Activated CD4-positive, alpha-beta T cell treated with anti-CD3 and anti-CD28 coated beads, Interleukin-2, amount 10 ng/mL, durations not matched to agents 24 days and 14 days (primary cell): ENCODE measurements at regions of chr16 and their contacts with region 1.

Region 1: GRCh38 chr16:75622761-75623605 is at the start of gene ADAT1:
- DNase-seq: peak; percentile 99
- H3K4me3 Mint-ChIP-seq: peak within 1 kb of the TSS; percentile 97
- H3K27ac Mint-ChIP-seq: peak within 1 kb of the TSS; percentile 97
- H3K4me1 Mint-ChIP-seq: peaks cover 31% of the 10 kb centered on the region
- H3K27me3 Mint-ChIP-seq: no peaks in the 10 kb centered on the region
- total RNA-seq, gene ADAT1: 58.6 and 64.4 TPM in 2 replicates

Region 2: GRCh38 chr16:74296432-74297144 is 1326.4 kb before region 1 on chr16 and contains the start of gene PSMD7:
- intact Hi-C with region 1: loop called (anchors 5 kb)
- DNase-seq: peak; percentile 97
- H3K4me3 Mint-ChIP-seq: peak within 1 kb of the TSS; percentile 89
- H3K27ac Mint-ChIP-seq: peak within 1 kb of the TSS; percentile 89
- H3K4me1 Mint-ChIP-seq: peaks cover 18% of the 10 kb centered on the region
- H3K27me3 Mint-ChIP-seq: no peaks in the 10 kb centered on the region
- total RNA-seq, gene PSMD7: 174 and 178 TPM in 2 replicates

Region 3: GRCh38 chr16:74984535-74985296 is 638.3 kb before region 1 on chr16 and contains the start of gene WDR59:
- intact Hi-C with region 1: loop called (anchors 10 kb)
- DNase-seq: peak; percentile 100
- H3K4me3 Mint-ChIP-seq: peak within 1 kb of the TSS; percentile 94
- H3K27ac Mint-ChIP-seq: peak within 1 kb of the TSS; percentile 95
- H3K4me1 Mint-ChIP-seq: peaks cover 16% of the 10 kb centered on the region
- H3K27me3 Mint-ChIP-seq: no peaks in the 10 kb centered on the region
- total RNA-seq, gene WDR59: 80.6 and 91.5 TPM in 2 replicates

Region 4: DNA sequence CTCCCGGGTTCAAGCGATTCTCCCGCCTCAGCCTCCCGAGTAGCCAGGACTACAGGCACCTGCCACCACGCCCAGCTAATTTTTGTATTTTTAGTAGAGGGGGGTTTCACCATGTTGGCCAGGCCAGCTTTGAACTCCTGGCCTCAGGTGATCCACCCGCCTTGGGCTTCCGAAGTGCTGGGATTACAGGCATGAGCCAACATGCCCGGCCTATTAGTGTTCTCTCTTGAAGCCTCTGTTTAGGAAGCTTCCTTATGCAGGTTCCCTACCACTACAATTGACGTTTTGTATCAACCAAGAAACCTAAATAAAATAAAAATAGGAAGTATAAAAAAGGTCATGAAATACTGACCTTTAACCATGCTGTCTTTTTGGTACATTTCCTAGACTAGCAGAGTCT is 103.1 kb before region 1 on chr16:
- intact Hi-C with region 1: loop called (anchors 1 kb)
- DNase-seq: no peak
- H3K4me3 Mint-ChIP-seq: no peak overlapping the region
- H3K27ac Mint-ChIP-seq: no peak overlapping the region
- H3K4me1 Mint-ChIP-seq: peaks cover 10% of the 10 kb centered on the region
- H3K27me3 Mint-ChIP-seq: peaks cover 7% of the 10 kb centered on the region

Region 5: DNA sequence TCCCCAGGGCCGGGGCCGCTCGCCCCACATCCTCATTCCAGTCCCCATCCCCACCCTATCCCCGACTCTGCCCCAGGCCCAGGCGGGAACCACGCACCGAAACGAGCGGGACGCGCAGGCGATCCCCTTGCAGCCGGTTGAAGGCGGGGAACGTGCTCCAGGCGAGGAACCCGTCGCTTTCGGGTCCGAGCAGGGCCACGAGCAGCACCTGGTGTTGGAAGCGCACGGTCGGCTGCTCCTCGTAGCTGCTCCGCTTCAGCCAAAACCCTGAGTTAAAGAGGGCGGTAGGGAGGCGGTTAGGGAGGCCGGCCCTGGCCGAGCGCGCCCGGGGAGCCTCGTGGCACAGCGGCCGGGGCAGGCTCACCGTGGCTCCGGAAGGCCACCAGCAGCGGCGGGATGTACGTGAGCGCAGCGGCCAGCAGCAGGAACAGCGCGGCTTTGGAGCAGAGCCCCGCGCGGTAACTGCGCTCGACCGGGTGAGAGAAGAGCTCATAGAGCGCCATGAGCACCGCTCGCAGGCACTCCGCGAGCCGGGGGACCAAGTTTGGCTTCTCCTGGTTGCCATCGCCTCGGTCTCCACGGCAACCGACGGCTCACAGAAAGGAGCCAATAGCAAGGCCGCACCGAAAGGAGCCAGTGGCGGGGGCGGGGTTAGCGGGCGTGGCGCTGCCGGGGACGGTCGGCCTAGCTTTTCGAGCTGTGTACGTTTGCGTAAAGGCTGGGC is 67.1 kb before region 1 on chr16 and contains the start of gene TMEM231:
- intact Hi-C with region 1: loop called (anchors 1 kb)
- DNase-seq: peak; percentile 99
- H3K4me3 Mint-ChIP-seq: peak within 1 kb of the TSS; percentile 92
- H3K27ac Mint-ChIP-seq: peak within 1 kb of the TSS; percentile 90
- H3K4me1 Mint-ChIP-seq: peaks cover 8% of the 10 kb centered on the region
- H3K27me3 Mint-ChIP-seq: peaks cover 20% of the 10 kb centered on the region
- total RNA-seq, gene TMEM231: 4.0 and 4.4 TPM in 2 replicates

Region 6: GRCh38 chr16:75566040-75566810 is 56.8 kb before region 1 on chr16 and contains the start of gene GABARAPL2:
- intact Hi-C with region 1: loop called (anchors 1 kb)
- DNase-seq: peak; percentile 98
- H3K4me3 Mint-ChIP-seq: peak within 1 kb of the TSS; percentile 90
- H3K27ac Mint-ChIP-seq: peak within 1 kb of the TSS; percentile 87
- H3K4me1 Mint-ChIP-seq: peaks cover 28% of the 10 kb centered on the region
- H3K27me3 Mint-ChIP-seq: peaks cover 14% of the 10 kb centered on the region
- total RNA-seq, gene GABARAPL2: 69.9 and 70.4 TPM in 2 replicates

Region 7: GRCh38 chr16:75640598-75640997 is 17.6 kb after region 1 on chr16:
- intact Hi-C with region 1: no loop called
- DNase-seq: no peak
- H3K4me3 Mint-ChIP-seq: no peak overlapping the region
- H3K27ac Mint-ChIP-seq: no peak overlapping the region
- H3K4me1 Mint-ChIP-seq: peaks cover 30% of the 10 kb centered on the region
- H3K27me3 Mint-ChIP-seq: no peaks in the 10 kb centered on the region